Sigmoid colon (tissue), 7 donors: ENCODE measurements at regions of chr1 and their contacts with region 1.

Region 1: DNA sequence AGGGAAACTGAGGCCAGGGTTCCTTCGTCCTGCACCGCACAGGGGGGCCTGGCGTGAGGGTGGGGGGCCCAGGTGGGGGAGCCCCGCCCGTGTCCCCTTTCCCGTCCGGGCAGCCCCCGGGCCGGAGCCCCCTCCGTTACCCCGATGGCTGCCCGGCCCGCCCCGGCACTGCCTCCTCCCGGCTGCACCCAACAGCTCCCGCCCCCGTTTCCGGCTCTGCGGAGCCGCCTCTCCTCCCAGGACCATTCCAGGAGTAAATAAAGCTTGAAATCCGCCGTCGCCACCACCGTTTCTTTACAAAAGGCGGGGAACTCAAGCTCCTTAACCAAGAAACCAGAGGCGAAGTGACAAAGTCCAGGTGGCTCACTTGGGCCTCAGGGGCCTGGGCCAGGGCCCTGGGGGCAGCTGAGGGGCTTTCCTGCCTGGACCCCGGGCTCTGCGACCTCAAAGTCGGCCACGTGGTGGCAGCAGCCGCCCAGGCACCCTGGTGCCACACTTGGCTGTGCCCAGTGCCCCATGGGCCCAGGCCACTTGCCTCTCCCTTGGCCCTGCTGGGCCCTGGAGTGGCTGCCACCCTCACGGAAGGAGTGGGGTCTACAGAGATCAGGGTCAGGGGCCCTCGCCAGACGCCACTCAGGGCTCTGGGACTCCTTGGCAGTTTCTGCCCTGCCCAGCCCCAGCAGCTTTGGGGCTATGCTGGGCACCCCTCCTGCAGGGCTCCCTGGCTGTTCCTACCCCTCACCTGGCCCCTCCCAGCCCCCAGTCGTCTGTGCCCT is 514 bp upstream of the FAAP20 start:
- DNase-seq: peak; percentile 97
- H3K4me3 ChIP-seq: peak overlapping the region; percentile 54 to 74 (median 69)
- H3K27ac ChIP-seq: peak overlapping the region; percentile 94 to 99 (median 96)
- H3K4me1 ChIP-seq: peaks cover 0 to 70% (median 66%) of the 10 kb centered on the region in 4 donors
- H3K27me3 ChIP-seq: no peaks in the 10 kb centered on the region
- CTCF ChIP-seq: peak; percentile 88 to 99 (median 96)
- EP300 ChIP-seq: peak in 1 of 4 donors; percentile 15
- POLR2A ChIP-seq: peak in 1 of 2 donors; percentile 41

Region 2: GRCh38 chr1:2381741-2382620 is 186.9 kb after region 1 on chr1:
- intact Hi-C with region 1: loop called (anchors 1 kb)
- DNase-seq: peak; percentile 93
- H3K4me3 ChIP-seq: no peak overlapping the region
- H3K27ac ChIP-seq: peak overlapping the region in 2 of 4 donors; percentile 12 to 26
- H3K4me1 ChIP-seq: peaks cover 0 to 16% (median 11%) of the 10 kb centered on the region in 4 donors
- H3K27me3 ChIP-seq: no peaks in the 10 kb centered on the region
- CTCF ChIP-seq: peak; percentile 93 to 96 (median 95)
- EP300 ChIP-seq: no peak
- POLR2A ChIP-seq: no peak

Region 3: DNA sequence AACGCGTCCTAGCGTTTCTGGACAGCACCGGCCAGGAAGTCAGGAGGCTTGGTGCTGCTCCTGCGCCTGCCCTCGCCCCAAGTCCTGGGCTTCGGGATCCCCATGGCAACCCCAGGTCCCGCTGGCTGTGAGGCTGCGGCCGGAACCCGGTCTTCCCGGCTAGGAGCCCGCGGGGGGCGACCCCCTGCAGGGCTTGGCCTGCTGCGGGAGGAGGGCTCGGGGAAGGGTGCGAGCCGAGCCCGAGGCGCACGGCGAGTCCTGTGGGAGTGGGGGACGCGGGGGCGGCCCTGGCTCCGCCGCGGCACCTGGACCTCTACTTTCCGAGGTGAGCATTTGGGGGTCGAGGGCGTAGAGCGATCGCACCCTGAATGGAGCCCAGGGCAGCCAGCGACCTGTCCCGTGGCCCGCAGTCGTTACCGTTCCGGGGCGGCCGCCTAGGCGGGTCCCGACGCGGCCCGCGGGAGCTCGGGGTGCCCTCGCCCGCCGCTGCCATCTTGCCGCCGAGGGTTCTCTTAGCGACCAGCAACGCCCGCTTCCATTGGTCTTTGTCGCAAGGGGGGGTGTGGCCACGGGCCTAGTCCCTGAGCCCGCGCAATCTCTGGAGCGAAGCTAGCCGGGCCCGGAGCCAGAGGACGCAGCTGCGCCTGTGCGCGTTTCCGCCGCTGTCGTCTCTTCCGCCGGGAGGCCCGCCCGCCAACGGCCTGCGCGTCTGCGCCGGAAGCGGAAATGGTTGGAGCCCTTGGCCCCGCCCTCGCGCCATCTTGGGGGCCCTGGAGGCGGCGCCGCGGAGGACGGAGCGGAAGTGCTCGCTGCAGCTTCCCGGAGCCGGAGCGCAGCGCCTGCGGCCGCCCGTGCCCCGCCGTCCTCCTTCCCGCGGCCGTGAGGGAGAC is 196.2 kb after region 1 on chr1 and contains the starts of genes MORN1 and RER1:
- intact Hi-C with region 1: loop called (anchors 5 kb)
- DNase-seq: peak; percentile 99
- H3K4me3 ChIP-seq: peak within 1 kb of the TSS; percentile 71 to 100 (median 85)
- H3K27ac ChIP-seq: peak within 1 kb of the TSS; percentile 83 to 96 (median 92)
- H3K4me1 ChIP-seq: peaks cover 0 to 45% (median 40%) of the 10 kb centered on the region in 4 donors
- H3K27me3 ChIP-seq: no peaks in the 10 kb centered on the region
- CTCF ChIP-seq: no peak
- EP300 ChIP-seq: peak in 1 of 4 donors; percentile 69
- POLR2A ChIP-seq: peak; percentile 16 to 41
- total RNA-seq, gene MORN1: 6.2 to 9.1 (median 6.7) TPM
- total RNA-seq, gene RER1: 49.0 to 56.2 (median 50.7) TPM

Region 4: DNA sequence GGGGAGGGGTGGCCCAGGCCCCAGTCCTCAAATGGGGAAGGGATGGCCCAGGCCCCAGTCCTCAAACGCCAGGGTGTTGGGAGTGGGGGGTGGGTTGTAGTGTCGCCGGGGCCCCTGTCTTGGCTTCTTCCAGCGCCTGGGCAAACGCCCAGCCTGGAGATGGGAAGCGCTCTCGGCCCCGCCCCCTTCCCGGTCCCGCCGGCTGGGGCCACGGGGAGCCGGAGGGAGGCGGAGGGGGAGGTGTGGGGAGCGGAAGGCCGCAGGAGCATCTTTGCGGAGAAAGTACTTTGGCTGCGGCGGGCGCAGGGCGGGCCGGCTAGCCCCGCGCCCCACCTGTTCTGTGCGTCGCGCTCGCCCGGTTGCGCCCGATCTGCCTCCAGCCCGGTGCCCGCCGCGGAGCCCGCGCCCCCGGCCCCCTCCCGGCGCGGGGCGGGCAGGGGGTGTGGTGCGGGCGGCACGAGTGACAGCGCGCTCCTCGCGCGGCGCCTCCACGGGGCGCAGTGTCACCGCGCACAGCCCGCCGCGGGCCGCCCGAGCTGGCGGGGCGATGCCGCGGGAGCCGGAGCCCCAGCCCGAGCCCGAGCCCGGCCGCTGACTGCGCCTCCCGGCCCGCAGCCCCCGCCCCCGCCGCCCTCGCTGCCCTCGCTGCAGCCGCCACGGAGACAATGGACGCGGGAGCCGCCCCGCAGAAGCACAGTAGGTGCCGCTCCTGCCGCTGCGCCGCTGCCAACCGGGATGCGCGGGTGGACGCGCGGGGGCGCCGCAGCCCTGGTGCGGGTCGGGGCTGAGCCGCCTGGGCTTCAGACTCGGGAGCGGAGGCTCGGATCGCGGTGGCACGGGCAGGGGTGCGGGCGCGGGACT is 248.4 kb after region 1 on chr1:
- intact Hi-C with region 1: no loop called
- DNase-seq: no peak
- H3K4me3 ChIP-seq: no peak overlapping the region
- H3K27ac ChIP-seq: no peak overlapping the region
- H3K4me1 ChIP-seq: no peaks in the 10 kb centered on the region
- H3K27me3 ChIP-seq: peaks cover 7 to 86% (median 36%) of the 10 kb centered on the region in 3 donors
- CTCF ChIP-seq: no peak
- EP300 ChIP-seq: no peak
- POLR2A ChIP-seq: no peak

Region 5: GRCh38 chr1:3624200-3625136 is 1429.4 kb after region 1 on chr1 and contains the start of gene TPRG1L:
- intact Hi-C with region 1: loop called (anchors 5 kb)
- DNase-seq: peak; percentile 99
- H3K4me3 ChIP-seq: peak within 1 kb of the TSS; percentile 84 to 99 (median 98)
- H3K27ac ChIP-seq: peak within 1 kb of the TSS; percentile 82 to 92 (median 90)
- H3K4me1 ChIP-seq: peaks cover 0 to 31% (median 28%) of the 10 kb centered on the region in 4 donors
- H3K27me3 ChIP-seq: no peaks in the 10 kb centered on the region
- CTCF ChIP-seq: no peak
- EP300 ChIP-seq: peak in 1 of 4 donors; percentile 20
- POLR2A ChIP-seq: no peak
- total RNA-seq, gene TPRG1L: 34.9 to 51.8 (median 43.2) TPM